Activated CD4-positive, alpha-beta T cell treated with anti-CD3 and anti-CD28 coated beads, Interleukin-2, amount 10 ng/mL, durations not matched to agents 7 days and 5 days (primary cell): ENCODE measurements at regions of chr11 and their contacts with region 1.

Region 1: DNA sequence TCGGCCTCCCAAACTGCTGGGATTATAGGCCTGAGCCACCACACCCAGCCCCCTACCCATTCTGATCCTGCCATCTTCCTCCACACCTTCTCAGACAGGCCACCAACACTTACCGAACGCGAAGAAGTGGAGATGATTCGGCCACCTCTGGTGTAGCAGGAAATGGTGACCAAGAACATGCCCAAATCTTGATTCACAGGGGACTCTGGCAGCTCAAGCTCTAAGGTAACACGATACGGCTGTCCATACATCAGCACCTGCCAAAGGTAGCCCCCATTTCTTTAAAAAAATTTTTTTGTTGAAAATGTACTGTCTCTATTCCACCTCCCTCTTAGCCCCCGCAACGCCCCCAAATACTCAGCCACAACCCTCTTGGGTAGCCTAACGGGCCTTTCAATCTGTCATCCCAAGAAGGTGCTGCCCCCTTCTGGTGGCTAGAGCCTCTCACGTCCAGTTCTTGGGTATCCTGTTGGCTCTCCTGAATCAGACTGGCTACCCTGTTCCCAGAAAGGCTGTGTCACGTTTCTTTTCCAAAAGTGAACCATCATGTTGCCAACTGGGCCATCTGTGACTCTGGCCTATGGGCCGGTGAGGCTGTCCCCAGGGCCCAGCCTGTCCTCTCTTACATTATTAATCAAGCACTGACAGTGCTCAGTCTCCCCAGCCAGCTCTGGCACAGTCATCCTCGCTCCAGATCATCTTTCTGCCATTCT is 5.3 kb upstream of the LRRN4CL start:
- DNase-seq: peak; percentile 83
- H3K4me3 Mint-ChIP-seq: no peak overlapping the region
- H3K27ac Mint-ChIP-seq: no peak overlapping the region
- H3K4me1 Mint-ChIP-seq: peaks cover 5% of the 10 kb centered on the region
- H3K27me3 Mint-ChIP-seq: no peaks in the 10 kb centered on the region

Region 2: GRCh38 chr11:62611705-62612365 is 82.8 kb before region 1 on chr11:
- CTCF ChIA-PET with region 1: no interaction called
- POLR2A ChIA-PET with region 1: no interaction called
- DNase-seq: no peak
- H3K4me3 Mint-ChIP-seq: peak overlapping the region; percentile 96
- H3K27ac Mint-ChIP-seq: peak overlapping the region; percentile 94
- H3K4me1 Mint-ChIP-seq: peaks cover 55% of the 10 kb centered on the region
- H3K27me3 Mint-ChIP-seq: no peaks in the 10 kb centered on the region

Region 3: DNA sequence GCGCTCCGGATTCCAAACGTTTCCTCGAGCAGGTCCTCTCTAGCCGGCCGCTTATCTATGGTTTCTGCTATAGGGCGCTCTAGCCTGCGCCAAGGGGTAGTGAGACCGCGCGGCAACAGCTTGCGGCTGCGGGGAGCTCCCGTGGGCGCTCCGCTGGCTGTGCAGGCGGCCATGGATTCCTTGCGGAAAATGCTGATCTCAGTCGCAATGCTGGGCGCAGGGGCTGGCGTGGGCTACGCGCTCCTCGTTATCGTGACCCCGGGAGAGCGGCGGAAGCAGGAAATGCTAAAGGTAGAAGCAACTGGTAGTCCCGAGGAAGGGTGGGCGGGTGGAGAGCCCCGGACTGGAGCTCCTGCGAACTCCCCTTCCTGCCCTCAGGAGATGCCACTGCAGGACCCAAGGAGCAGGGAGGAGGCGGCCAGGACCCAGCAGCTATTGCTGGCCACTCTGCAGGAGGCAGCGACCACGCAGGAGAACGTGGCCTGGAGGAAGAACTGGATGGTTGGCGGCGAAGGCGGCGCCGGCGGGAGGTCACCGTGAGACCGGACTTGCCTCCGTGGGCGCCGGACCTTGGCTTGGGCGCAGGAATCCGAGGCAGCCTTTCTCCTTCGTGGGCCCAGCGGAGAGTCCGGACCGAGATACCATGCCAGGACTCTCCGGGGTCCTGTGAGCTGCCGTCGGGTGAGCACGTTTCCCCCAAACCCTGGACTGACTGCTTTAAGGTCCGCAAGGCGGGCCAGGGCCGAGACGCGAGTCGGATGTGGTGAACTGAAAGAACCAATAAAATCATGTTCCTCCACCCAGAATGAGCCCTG is 22.8 kb before region 1 on chr11 and contains the starts of genes LBHD1 and UQCC3:
- CTCF ChIA-PET with region 1: interaction called, 10 read pairs
- POLR2A ChIA-PET with region 1: no interaction called
- DNase-seq: peak; percentile 89
- H3K4me3 Mint-ChIP-seq: peak within 1 kb of the TSS; percentile 99
- H3K27ac Mint-ChIP-seq: peak within 1 kb of the TSS; percentile 98
- H3K4me1 Mint-ChIP-seq: peaks cover 59% of the 10 kb centered on the region
- H3K27me3 Mint-ChIP-seq: no peaks in the 10 kb centered on the region
- total RNA-seq, gene LBHD1: 19.5 to 21.3 TPM
- total RNA-seq, gene UQCC3: 6.7 to 7.4 TPM

Region 4: DNA sequence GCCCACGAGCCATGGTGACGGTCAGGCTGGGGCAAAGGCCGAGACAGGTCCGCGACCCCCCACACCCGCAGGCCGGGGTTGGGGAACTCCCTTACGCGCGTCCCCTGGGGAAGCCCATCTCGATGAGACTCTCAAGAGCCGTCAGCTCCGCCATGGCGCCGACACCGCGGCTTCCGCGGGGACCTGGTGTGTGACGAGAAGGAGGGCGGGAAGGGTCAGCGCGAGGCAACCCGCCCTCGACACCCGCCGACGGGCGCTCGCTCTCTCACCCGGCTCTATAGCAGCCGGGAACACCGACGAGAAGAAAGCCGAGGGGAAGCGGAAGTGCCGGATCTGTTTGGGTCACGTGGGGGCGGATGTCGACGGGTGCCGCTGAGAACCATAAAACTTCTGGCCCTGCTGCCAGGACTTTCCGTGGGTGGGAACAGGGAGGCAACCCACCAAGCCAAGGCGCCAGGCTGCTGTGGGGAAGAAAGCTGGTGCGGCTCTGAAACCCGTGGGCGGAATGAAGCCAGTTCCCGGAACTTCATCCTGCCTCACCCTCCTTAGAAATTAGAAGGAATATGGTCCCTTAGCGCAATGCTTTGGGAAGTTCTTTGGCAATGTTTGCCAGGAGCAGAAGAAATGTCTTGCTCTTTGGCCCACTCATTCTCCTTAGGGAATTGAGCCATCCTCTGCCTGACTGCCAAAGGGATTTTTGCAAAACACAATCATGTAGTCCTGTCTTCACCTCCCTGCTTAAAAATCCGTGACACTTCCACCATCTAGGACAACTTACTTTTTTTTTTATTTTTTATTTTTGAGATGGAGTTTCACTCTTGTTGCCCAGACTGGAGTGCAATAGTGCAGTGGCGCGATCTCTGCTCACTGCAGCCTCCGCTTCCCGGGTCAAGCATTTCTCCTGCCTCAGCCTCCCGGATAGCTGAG is 15.6 kb before region 1 on chr11 and contains the start of gene UBXN1:
- CTCF ChIA-PET with region 1: interaction called, 12 read pairs
- POLR2A ChIA-PET with region 1: interaction called, 8 read pairs
- DNase-seq: peak; percentile 89
- H3K4me3 Mint-ChIP-seq: peak within 1 kb of the TSS; percentile 90
- H3K27ac Mint-ChIP-seq: peak within 1 kb of the TSS; percentile 92
- H3K4me1 Mint-ChIP-seq: peaks cover 42% of the 10 kb centered on the region
- H3K27me3 Mint-ChIP-seq: no peaks in the 10 kb centered on the region
- total RNA-seq, gene UBXN1: 126 to 146 TPM

Region 5: DNA sequence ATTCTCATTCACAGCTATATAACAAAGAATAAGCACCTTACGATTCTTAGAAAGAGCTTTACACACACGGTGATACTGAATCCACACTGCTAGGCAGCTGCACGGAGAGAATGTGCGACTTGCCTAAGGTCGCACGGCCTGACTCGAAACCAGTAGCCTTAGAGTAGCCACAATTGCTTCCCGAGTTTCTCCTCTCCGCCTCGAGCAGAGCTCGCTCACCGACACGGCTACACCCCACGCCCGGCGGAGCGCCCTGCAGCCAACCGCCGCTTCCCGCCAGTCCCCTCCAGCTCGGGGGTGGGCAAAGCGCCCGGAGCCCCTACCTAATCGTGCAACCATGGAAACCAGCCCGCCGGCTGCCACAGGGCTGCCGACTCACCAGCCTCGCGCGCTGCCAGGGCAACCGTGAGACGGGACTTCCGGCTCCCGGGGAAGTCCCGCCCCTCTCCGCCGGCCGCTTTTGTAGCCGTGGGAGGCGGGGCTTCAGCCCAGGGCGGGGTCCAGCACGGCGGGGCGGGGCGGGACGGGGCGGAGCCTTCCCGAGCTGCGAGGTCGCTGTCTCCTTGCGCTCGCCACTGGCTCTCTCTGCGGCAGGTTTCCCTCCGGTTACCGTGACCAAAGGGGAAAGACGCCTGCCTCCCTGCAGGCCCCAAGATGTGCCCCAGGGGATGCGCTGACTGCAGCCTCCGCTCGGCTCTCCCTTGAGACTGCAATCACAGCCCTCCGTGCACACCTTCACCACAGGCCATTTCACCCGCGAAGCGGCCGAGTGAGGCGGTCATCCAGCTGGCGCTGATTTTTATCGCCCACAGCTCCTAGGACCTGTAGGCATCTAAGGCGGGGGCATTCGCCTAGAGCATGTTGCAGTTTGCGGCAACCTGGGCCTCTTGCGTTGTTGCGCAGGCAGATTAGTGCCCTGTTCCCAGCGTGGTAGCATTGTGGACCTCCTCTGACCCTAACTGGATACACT is 11.6 kb after region 1 on chr11:
- CTCF ChIA-PET with region 1: interaction called, 11 read pairs
- POLR2A ChIA-PET with region 1: no interaction called
- DNase-seq: peak; percentile 94
- H3K4me3 Mint-ChIP-seq: peak overlapping the region; percentile 88
- H3K27ac Mint-ChIP-seq: peak overlapping the region; percentile 81
- H3K4me1 Mint-ChIP-seq: peaks cover 49% of the 10 kb centered on the region
- H3K27me3 Mint-ChIP-seq: no peaks in the 10 kb centered on the region

Region 6: GRCh38 chr11:62786318-62787004 is 91.8 kb after region 1 on chr11:
- CTCF ChIA-PET with region 1: no interaction called
- POLR2A ChIA-PET with region 1: no interaction called
- DNase-seq: peak; percentile 87
- H3K4me3 Mint-ChIP-seq: peak overlapping the region; percentile 78
- H3K27ac Mint-ChIP-seq: peak overlapping the region; percentile 93
- H3K4me1 Mint-ChIP-seq: peaks cover 42% of the 10 kb centered on the region
- H3K27me3 Mint-ChIP-seq: no peaks in the 10 kb centered on the region